Transverse colon (tissue), 4 donors: ENCODE measurements at regions of chr15 and their contacts with region 1.

Region 1: GRCh38 chr15:35606450-35606779 is 60.5 kb upstream of the DPH6 start:
- DNase-seq: no peak
- H3K4me3 ChIP-seq: no peak overlapping the region
- H3K27ac ChIP-seq: no peak overlapping the region
- H3K4me1 ChIP-seq: no peaks in the 10 kb centered on the region
- H3K27me3 ChIP-seq: no peaks in the 10 kb centered on the region
- CTCF ChIP-seq: no peak
- EP300 ChIP-seq: no peak
- POLR2A ChIP-seq: no peak

Region 2: GRCh38 chr15:35319354-35319753 is 287.1 kb before region 1 on chr15:
- in situ Hi-C with region 1: no loop called
- intact Hi-C with region 1: loop called (anchors 5 kb)
- DNase-seq: no peak
- H3K4me3 ChIP-seq: no peak overlapping the region
- H3K27ac ChIP-seq: no peak overlapping the region
- H3K4me1 ChIP-seq: peaks cover 0 to 14% (median 8%) of the 10 kb centered on the region in 4 donors
- H3K27me3 ChIP-seq: no peaks in the 10 kb centered on the region
- CTCF ChIP-seq: no peak
- EP300 ChIP-seq: no peak
- POLR2A ChIP-seq: no peak